ENCODE measurements at regions of chr3 and their contacts with region 1.

Region 1: GRCh38 chr3:198113206-198114053 is 153.4 kb downstream of the LMLN start:
- DNase-seq: peak in 1 of 2 experiments; percentile 54
- H3K4me3 ChIP-seq: peak overlapping the region; percentile 20 to 58 (median 30)
- H3K27ac ChIP-seq: no peak overlapping the region
- H3K4me1 ChIP-seq: peaks cover 0 to 2% (median 0%) of the 10 kb centered on the region in 4 experiments; a peak in 1 of 7 replicates
- H3K27me3 ChIP-seq: peaks cover 13 to 42% (median 28%) of the 10 kb centered on the region in 4 experiments
- CTCF ChIP-seq: no peak
- EP300 ChIP-seq: no peak
- POLR2A ChIP-seq: no peak
- RAD21 ChIP-seq: no peak

Region 2: GRCh38 chr3:198080521-198081280 is 32.7 kb before region 1 on chr3:
- CTCF ChIA-PET with region 1: interaction called, 15 read pairs
- POLR2A ChIA-PET with region 1: no interaction called
- DNase-seq: peak; percentile 64 to 91
- H3K4me3 ChIP-seq: peak overlapping the region; percentile 26 to 62 (median 44)
- H3K27ac ChIP-seq: no peak overlapping the region
- H3K4me1 ChIP-seq: peaks cover 0 to 7% (median 1%) of the 10 kb centered on the region in 4 experiments; a peak in 3 of 7 replicates
- H3K27me3 ChIP-seq: peaks cover 15 to 60% (median 33%) of the 10 kb centered on the region in 4 experiments
- CTCF ChIP-seq: peak; percentile 56 to 69 (median 63)
- EP300 ChIP-seq: peak in 1 of 2 experiments; percentile 49; a peak in 1 of 3 replicates
- POLR2A ChIP-seq: no peak
- RAD21 ChIP-seq: peak; percentile 6 to 51; a peak in 1 of 4 replicates